Breast epithelium (tissue), 4 donors: ENCODE measurements at regions of chr16 and their contacts with region 1.

Region 1: GRCh38 chr16:59614466-59615240 is 880.5 kb upstream of the GOT2 start:
- DNase-seq: no peak
- H3K4me3 ChIP-seq: no peak overlapping the region
- H3K27ac ChIP-seq: no peak overlapping the region
- H3K4me1 ChIP-seq: no peaks in the 10 kb centered on the region
- H3K27me3 ChIP-seq: no peaks in the 10 kb centered on the region
- CTCF ChIP-seq: no peak
- POLR2A ChIP-seq: no peak

Region 2: GRCh38 chr16:60491273-60491672 is 876.6 kb after region 1 on chr16:
- intact Hi-C with region 1: loop called (anchors 5 kb)
- DNase-seq: no peak
- H3K4me3 ChIP-seq: no peak overlapping the region
- H3K27ac ChIP-seq: no peak overlapping the region
- H3K4me1 ChIP-seq: no peaks in the 10 kb centered on the region
- H3K27me3 ChIP-seq: no peaks in the 10 kb centered on the region
- CTCF ChIP-seq: no peak
- POLR2A ChIP-seq: no peak